MCF 10A (cell line): ENCODE measurements at regions of chr4 and their contacts with region 1.

Region 1: DNA sequence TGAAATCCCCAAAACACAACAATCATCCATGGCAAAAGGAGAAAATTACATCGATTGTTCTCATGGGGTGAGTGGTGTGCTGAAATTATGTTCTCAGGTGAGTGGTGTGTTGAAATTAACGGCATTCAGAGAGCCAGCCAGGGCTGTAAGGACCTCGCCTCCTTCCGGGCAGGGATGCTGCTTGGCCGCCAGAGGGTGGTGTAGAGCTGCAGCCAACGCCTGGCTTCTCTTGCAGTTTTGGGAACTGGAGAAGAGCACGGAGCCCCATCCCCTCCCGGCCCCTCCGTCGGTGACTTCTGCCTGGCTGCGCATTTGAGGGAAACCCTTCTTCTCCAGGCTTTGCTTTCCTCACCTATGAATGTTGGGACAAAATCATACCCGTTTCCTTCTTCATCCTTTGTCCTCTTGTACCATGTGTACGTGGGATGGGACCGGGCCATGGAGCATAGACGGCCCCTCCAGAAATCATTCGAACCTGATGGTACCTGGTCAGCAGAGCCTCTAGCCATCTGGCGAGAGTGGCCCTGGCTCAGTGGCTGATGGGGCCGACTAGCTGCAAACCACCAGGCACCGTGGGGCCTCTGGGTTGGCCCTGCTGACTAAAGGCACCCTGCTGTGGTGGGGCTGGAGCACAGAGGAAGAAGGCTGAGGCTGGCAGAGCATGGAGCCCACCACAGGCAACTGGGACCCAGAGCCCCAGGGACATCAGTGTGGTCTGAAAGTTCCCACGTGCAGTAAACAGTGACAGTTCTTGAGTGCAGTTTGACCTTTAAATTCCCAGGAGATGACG is 28.4 kb downstream of the TRMT44 start:
- DNase-seq: peak; percentile 66
- H3K4me3 Mint-ChIP-seq: no peak overlapping the region
- H3K27ac Mint-ChIP-seq: peak overlapping the region; percentile 39
- H3K4me1 Mint-ChIP-seq: no peaks in the 10 kb centered on the region
- H3K27me3 Mint-ChIP-seq: no peaks in the 10 kb centered on the region
- CTCF ChIP-seq: peak; percentile 85

Region 2: DNA sequence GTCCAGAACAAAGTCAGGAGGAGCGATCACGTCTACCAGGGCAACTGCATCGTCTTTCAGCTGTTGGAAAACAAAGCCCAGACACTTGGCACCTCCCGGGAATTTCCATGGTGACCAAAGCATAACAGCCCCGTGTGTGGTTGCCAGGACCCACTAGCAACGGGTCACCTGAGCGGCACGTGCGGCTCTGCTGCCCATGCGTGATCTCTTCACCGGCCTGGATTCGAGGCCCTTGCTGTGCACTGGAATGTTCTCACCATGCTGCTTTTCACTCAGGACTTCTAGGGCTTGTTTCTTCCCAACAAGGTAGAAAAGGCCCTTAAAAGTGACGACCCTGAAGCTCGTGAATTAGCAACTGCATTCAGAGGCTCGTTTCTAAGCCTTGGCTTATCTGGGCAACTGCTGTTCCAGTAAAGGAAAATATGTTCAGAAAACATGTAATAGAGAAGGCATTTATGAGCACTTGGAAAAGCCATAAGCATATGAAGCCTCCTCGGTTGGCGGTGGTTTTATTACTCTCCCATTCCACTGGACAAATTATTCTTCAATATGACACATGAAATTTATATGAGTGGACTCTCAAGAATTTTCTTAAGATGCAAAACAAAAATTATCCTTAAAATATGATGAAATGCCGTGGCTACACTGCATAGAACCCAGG is 97.9 kb before region 1 on chr4:
- CTCF ChIA-PET with region 1: no interaction called
- POLR2A ChIA-PET with region 1: no interaction called
- intact Hi-C with region 1: no loop called
- DNase-seq: no peak
- H3K4me3 Mint-ChIP-seq: no peak overlapping the region
- H3K27ac Mint-ChIP-seq: no peak overlapping the region
- H3K4me1 Mint-ChIP-seq: no peaks in the 10 kb centered on the region
- H3K27me3 Mint-ChIP-seq: no peaks in the 10 kb centered on the region
- CTCF ChIP-seq: no peak

Region 3: GRCh38 chr4:8537041-8537552 is 68.2 kb after region 1 on chr4:
- CTCF ChIA-PET with region 1: no interaction called
- POLR2A ChIA-PET with region 1: interaction called, 3 read pairs
- intact Hi-C with region 1: loop called (anchors 5 kb)
- DNase-seq: peak; percentile 99
- H3K4me3 Mint-ChIP-seq: no peak overlapping the region
- H3K27ac Mint-ChIP-seq: no peak overlapping the region
- H3K4me1 Mint-ChIP-seq: peaks cover 33% of the 10 kb centered on the region
- H3K27me3 Mint-ChIP-seq: no peaks in the 10 kb centered on the region
- CTCF ChIP-seq: no peak

Region 4: DNA sequence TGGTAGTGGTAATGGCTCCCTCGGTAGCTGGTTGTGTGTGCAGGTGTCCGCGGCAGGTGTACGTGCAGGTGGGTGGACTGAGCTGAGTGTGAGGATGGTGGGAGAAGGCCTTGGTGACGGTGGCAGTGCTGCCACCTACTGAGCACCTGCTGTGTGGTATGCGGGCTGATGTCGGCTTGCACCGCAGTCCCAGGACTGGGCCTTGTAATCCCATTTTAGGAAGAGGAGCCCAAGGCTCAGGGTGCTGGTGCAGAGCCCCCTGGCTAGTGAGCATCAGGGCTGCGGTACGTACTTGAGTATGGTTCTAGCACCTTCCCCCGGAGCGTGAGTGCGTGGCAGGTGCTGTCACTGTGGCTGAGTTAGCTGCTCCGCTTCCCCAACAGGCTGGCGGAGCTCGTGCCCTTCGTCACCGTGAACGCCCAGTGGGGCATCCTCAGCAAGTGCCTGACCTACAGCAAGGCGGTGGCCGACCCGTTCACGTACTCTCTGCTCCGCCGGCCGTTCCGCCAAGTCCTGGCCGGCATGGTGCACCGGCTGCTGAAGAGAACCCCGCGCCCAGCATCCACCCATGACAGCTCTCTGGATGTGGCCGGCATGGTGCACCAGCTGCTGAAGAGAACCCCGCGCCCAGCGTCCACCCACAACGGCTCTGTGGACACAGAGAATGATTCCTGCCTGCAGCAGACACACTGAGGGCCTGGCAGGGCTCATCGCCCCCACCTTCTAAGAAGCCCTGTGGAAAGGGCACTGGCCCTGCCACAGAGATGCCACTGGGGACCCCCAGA is 117.9 kb after region 1 on chr4:
- CTCF ChIA-PET with region 1: interaction called, 10 read pairs
- POLR2A ChIA-PET with region 1: no interaction called
- intact Hi-C with region 1: loop called (anchors 2 kb)
- DNase-seq: no peak
- H3K4me3 Mint-ChIP-seq: no peak overlapping the region
- H3K27ac Mint-ChIP-seq: no peak overlapping the region
- H3K4me1 Mint-ChIP-seq: no peaks in the 10 kb centered on the region
- H3K27me3 Mint-ChIP-seq: peaks cover 55% of the 10 kb centered on the region
- CTCF ChIP-seq: peak; percentile 26

Region 5: GRCh38 chr4:8599657-8600056 is 130.7 kb after region 1 on chr4:
- CTCF ChIA-PET with region 1: interaction called, 27 read pairs
- POLR2A ChIA-PET with region 1: no interaction called
- intact Hi-C with region 1: loop called (anchors 1 kb)
- DNase-seq: peak; percentile 94
- H3K4me3 Mint-ChIP-seq: no peak overlapping the region
- H3K27ac Mint-ChIP-seq: no peak overlapping the region
- H3K4me1 Mint-ChIP-seq: peaks cover 8% of the 10 kb centered on the region
- H3K27me3 Mint-ChIP-seq: peaks cover 15% of the 10 kb centered on the region
- CTCF ChIP-seq: no peak